ENCODE measurements at regions of chr14 and their contacts with region 1.

Region 1: DNA sequence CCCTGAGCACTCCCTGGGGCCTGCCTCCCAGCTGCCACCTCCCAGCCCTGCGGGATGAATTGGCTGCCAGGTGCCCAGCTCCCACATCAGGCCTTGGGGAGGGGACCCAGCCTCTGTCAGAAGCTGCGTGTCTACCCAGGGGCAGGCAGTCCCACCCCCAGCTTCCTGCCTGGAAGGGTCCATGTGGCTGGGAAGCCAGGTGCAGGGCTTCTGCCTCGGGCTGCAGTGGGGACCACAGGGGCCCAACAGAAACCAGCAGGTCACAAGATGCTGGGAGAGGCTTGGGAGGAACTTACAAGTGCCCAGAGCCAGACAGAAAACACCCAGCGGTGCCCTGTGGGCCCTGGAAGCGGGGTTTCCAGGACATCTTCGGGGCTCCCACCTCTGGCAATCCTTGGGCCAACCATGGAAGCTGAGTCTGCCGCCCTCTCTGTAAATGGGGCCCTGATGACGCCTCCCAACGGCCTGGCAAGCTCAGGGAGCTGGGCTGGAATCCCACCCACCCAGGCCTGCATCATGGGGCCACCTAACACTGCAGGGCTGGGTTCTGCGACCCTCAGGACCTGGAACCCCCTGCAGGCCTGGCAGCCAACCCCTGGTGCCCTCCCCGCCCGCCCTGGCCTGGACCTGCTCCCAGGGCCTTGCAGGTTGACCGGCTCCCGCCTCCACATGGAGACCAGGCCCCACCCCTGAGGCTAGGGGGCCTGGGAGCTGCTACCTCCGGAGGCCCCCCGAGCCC is 36.6 kb downstream of the CCNK start:
- DNase-seq: no peak
- H3K4me3 ChIP-seq: no peak overlapping the region
- H3K27ac ChIP-seq: no peak overlapping the region
- H3K4me1 ChIP-seq: no peaks in the 10 kb centered on the region
- H3K27me3 ChIP-seq: no peaks in the 10 kb centered on the region

Region 2: DNA sequence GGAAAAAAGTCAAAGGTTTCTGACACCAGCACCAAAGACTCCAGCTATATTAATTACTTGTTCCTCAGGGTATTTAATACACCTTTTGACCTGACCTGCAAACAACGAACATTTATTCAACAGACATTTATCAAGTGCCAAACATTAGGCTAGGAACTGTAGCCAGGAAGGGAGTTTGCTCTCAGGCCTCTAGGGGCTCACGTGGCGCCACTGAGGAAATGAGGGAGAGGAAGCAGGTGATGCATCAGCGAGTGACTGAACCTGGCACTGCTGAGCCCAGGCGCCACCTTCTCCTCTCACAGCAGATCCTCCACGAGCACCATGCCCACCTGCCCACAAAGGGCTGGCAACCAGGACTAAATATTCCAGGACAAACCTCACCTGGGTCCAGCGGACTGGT is 87.3 kb before region 1 on chr14:
- CTCF ChIA-PET with region 1: no interaction called
- POLR2A ChIA-PET with region 1: no interaction called
- DNase-seq: peak in 2 of 3 donors; percentile 27 to 39
- H3K4me3 ChIP-seq: no peak overlapping the region
- H3K27ac ChIP-seq: no peak overlapping the region
- H3K4me1 ChIP-seq: no peaks in the 10 kb centered on the region
- H3K27me3 ChIP-seq: no peaks in the 10 kb centered on the region

Region 3: GRCh38 chr14:99447739-99448138 is 70.1 kb before region 1 on chr14:
- CTCF ChIA-PET with region 1: no interaction called
- POLR2A ChIA-PET with region 1: no interaction called
- DNase-seq: no peak
- H3K4me3 ChIP-seq: no peak overlapping the region
- H3K27ac ChIP-seq: no peak overlapping the region
- H3K4me1 ChIP-seq: no peaks in the 10 kb centered on the region
- H3K27me3 ChIP-seq: no peaks in the 10 kb centered on the region

Region 4: GRCh38 chr14:99537399-99537798 is 19.6 kb after region 1 on chr14:
- CTCF ChIA-PET with region 1: no interaction called
- POLR2A ChIA-PET with region 1: no interaction called
- DNase-seq: no peak
- H3K4me3 ChIP-seq: no peak overlapping the region
- H3K27ac ChIP-seq: no peak overlapping the region
- H3K4me1 ChIP-seq: peaks cover 0 to 12% (median 3%) of the 10 kb centered on the region in 4 experiments
- H3K27me3 ChIP-seq: peaks cover 0 to 16% (median 3%) of the 10 kb centered on the region in 5 experiments

Region 5: DNA sequence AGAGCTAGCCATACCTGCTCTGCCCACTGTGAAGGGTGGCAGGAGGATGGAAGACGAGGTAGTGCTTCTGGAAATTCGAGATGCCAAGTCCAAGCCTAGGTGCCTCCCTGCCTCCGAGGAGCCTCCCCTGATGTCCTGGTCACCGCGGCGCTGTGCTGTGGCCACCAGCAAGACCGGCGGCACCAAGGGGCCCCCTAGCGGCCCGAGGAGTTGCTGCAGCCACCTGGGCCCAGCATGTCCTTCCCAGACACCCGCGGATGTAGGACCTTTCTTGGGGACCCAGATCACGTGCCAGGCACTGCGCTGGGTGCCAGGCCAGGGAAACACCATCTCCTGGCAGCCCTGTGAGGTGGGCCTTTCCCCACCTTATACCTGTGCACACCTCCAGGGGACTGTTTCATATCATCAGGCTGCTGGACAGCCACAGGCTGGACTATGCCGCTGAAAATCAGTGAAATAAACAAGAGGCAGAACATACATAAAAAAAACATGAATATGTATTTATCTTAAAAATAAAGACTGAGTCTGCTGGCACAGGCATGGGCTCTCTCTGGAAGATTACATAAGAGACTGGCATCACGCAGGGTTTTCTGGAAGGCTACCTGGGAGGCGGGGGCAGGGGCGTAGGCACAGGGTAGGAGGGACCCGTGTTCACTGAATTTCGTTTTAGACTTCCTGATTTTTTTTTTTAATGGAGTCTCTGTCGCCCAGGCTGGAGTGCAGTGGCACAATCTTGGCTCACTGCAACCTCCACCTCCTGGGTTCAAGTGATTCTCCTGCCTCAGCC is 111.2 kb after region 1 on chr14:
- CTCF ChIA-PET with region 1: interaction called, 11 read pairs
- POLR2A ChIA-PET with region 1: no interaction called
- DNase-seq: peak; percentile 52 to 69 (median 66)
- H3K4me3 ChIP-seq: no peak overlapping the region
- H3K27ac ChIP-seq: no peak overlapping the region
- H3K4me1 ChIP-seq: no peaks in the 10 kb centered on the region
- H3K27me3 ChIP-seq: peaks cover 0 to 13% (median 2%) of the 10 kb centered on the region in 5 experiments

Measured in common myeloid progenitor, CD34-positive (primary cell).